ENCODE measurements at regions of chr4 and their contacts with region 1.

Region 1: GRCh38 chr4:155953151-155954114 is at the start of gene CTSO:
- DNase-seq: peak; percentile 87 to 91
- ATAC-seq: peak; percentile 94
- H3K4me3 ChIP-seq: peak within 1 kb of the TSS; percentile 86 to 96
- H3K27ac ChIP-seq: peak within 1 kb of the TSS; percentile 99
- H3K4me1 ChIP-seq: peaks cover 0 to 4% of the 10 kb centered on the region in 2 donors
- H3K27me3 ChIP-seq: no peaks in the 10 kb centered on the region
- total RNA-seq, gene CTSO: 20.0 to 36.5 TPM

Region 2: DNA sequence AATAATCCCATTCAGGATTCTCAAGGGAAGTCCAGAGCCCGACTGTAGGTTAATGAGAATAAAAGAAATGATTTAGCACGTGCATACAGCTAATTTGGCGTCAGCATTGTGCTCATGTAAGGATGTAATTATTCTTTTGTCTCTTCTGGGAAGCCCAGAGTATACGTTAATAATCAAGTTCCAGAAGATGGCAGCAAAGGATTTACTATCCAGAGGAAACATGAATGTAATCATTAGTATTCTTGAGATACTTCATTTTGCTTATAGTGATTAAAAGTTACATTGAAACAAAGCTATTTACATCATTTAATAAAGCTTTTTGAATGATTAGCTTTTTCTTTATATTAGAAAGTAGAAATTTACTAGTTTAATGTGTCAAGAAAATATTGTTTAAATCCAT is 549.5 kb before region 1 on chr4:
- intact Hi-C with region 1: loop called (anchors 5 to 10 kb)
- DNase-seq: no peak
- ATAC-seq: no peak
- H3K4me3 ChIP-seq: no peak overlapping the region
- H3K27ac ChIP-seq: no peak overlapping the region
- H3K4me1 ChIP-seq: no peaks in the 10 kb centered on the region
- H3K27me3 ChIP-seq: no peaks in the 10 kb centered on the region

Region 3: GRCh38 chr4:155809835-155810234 is 143.6 kb before region 1 on chr4:
- intact Hi-C with region 1: loop called (anchors 2 to 5 kb)
- DNase-seq: no peak
- ATAC-seq: peak; percentile 76
- H3K4me3 ChIP-seq: no peak overlapping the region
- H3K27ac ChIP-seq: no peak overlapping the region
- H3K4me1 ChIP-seq: peaks cover 0 to 2% of the 10 kb centered on the region in 2 donors
- H3K27me3 ChIP-seq: no peaks in the 10 kb centered on the region

Region 4: GRCh38 chr4:155837203-155837796 is 116.1 kb before region 1 on chr4:
- intact Hi-C with region 1: no loop called
- DNase-seq: no peak
- ATAC-seq: no peak
- H3K4me3 ChIP-seq: no peak overlapping the region
- H3K27ac ChIP-seq: no peak overlapping the region
- H3K4me1 ChIP-seq: no peaks in the 10 kb centered on the region
- H3K27me3 ChIP-seq: no peaks in the 10 kb centered on the region

Region 5: DNA sequence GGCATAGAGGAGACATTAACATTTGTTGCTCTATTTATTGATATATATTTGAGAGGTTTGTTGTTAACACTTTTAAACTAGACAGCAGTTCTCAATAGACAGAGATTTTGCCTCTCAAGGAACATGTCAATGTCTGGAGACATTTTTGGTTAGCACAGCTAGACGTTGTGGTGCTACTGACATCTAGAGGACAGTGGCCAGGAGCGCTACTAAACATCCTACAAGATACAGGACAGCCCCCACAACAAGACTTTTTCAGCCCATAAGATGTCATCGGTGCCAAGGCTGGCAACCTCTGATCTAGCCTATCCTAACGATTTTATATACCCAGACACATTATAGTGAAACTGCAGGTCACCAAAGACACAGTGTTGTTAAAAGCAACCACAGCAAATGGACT is 18.7 kb after region 1 on chr4:
- intact Hi-C with region 1: no loop called
- DNase-seq: no peak
- ATAC-seq: no peak
- H3K4me3 ChIP-seq: no peak overlapping the region
- H3K27ac ChIP-seq: no peak overlapping the region
- H3K4me1 ChIP-seq: no peaks in the 10 kb centered on the region
- H3K27me3 ChIP-seq: peaks cover 0 to 2% of the 10 kb centered on the region in 2 donors

Region 6: GRCh38 chr4:156006192-156006591 is 52.8 kb after region 1 on chr4:
- intact Hi-C with region 1: no loop called
- DNase-seq: no peak
- ATAC-seq: no peak
- H3K4me3 ChIP-seq: no peak overlapping the region
- H3K27ac ChIP-seq: no peak overlapping the region
- H3K4me1 ChIP-seq: no peaks in the 10 kb centered on the region
- H3K27me3 ChIP-seq: no peaks in the 10 kb centered on the region